GM12878 (cell line): ENCODE measurements at regions of chr5 and their contacts with region 1.

Region 1: DNA sequence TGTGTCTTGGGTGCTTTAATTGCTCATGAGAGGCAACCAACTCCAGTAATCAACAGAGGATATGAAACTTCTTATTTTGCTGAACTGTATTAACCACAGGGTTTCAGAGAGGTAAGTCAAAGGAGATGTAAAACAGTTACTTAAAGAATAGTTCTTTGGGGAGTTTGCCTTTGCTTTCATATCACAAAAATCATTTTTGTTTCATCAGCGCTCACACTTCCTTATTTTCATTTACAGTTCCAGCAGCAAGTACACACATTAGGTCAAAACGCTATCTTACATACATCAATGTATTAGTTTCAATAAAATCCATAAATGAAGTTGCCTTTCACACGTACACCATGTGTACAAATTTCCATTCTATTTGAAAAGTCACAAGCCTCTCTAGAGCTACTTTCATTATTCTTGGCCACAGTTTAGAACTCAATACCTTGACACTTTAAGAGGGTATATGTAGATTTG is 50.1 kb downstream of the ST8SIA4 start:
- DNase-seq: peak; percentile 89
- ATAC-seq: peak; percentile 89
- H3K4me3 ChIP-seq: peak overlapping the region; percentile 21; the same call in 1 of the 2 replicates
- H3K27ac ChIP-seq: peak overlapping the region; percentile 94
- H3K4me1 ChIP-seq: peaks cover 38% of the 10 kb centered on the region
- H3K27me3 ChIP-seq: no peaks in the 10 kb centered on the region
- CTCF ChIP-seq: no peak
- EP300 ChIP-seq: peak; percentile 95 to 96
- POLR2A ChIP-seq: no peak
- RAD21 ChIP-seq: peak; percentile 20; the same call in 1 of the 2 replicates

Region 2: DNA sequence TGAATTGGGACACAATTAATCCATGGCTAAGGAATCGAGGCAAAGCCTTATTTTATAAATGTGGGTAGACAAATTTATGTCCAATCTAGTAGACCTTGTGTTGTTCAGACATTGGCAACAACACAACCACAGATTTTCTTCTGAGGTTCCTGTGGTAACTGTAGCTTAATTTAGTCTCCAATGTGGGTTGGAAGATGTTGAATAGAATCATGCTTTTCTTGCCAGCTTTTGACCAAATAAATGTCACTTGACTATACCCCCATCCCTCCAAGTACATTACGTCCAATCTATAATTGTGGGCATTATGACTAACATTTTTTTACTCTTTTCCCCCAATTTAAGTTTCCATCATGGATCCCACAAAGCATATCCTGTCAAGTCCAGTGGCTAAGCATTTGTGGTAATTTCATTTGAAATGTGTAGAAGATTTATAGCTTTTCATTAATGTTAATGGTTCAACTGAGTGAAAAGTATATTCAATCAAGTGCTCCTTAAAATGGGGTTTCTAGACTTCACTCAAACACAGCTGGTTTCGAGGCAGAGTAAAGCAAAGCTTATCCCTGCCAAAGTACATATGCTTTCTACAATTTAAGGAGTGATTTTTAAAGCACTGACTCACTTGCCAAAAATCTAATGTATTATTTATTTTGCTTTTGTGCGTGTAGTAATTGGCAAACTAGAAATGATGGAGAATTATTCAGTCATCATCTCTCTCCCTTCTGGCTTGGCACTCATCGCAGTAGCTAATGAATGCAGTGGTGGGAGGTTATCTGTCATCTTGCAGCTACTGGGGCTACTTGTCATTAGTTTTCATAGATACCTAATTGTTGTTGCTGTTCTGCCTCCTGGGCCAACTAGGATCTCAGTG is 176.0 kb before region 1 on chr5:
- CTCF ChIA-PET with region 1: no interaction called
- POLR2A ChIA-PET with region 1: no interaction called
- RAD21 ChIA-PET with region 1: no interaction called
- SMC1A ChIA-PET with region 1: no interaction called
- in situ Hi-C with region 1: no loop called
- intact Hi-C with region 1: no loop called
- DNase-seq: no peak
- ATAC-seq: no peak; the same call in 2 of the 3 replicates
- H3K4me3 ChIP-seq: no peak overlapping the region
- H3K27ac ChIP-seq: no peak overlapping the region
- H3K4me1 ChIP-seq: no peaks in the 10 kb centered on the region
- H3K27me3 ChIP-seq: no peaks in the 10 kb centered on the region
- CTCF ChIP-seq: no peak
- EP300 ChIP-seq: no peak
- POLR2A ChIP-seq: no peak
- RAD21 ChIP-seq: no peak

Region 3: GRCh38 chr5:100697970-100698369 is 155.0 kb before region 1 on chr5:
- CTCF ChIA-PET with region 1: no interaction called
- POLR2A ChIA-PET with region 1: no interaction called
- RAD21 ChIA-PET with region 1: no interaction called
- SMC1A ChIA-PET with region 1: no interaction called
- in situ Hi-C with region 1: no loop called
- intact Hi-C with region 1: no loop called
- DNase-seq: no peak
- ATAC-seq: no peak
- H3K4me3 ChIP-seq: no peak overlapping the region
- H3K27ac ChIP-seq: no peak overlapping the region
- H3K4me1 ChIP-seq: no peaks in the 10 kb centered on the region
- H3K27me3 ChIP-seq: no peaks in the 10 kb centered on the region
- CTCF ChIP-seq: peak in 2 of 3 experiments; percentile 12 to 14; a peak in 1 of 6 replicates
- EP300 ChIP-seq: no peak
- POLR2A ChIP-seq: no peak
- RAD21 ChIP-seq: no peak

Region 4: GRCh38 chr5:100890461-100891008 is 37.5 kb after region 1 on chr5:
- CTCF ChIA-PET with region 1: interaction called, 11 read pairs
- POLR2A ChIA-PET with region 1: interaction called, 3 read pairs
- RAD21 ChIA-PET with region 1: interaction called, 122 read pairs
- SMC1A ChIA-PET with region 1: interaction called, 220 read pairs
- in situ Hi-C with region 1: no loop called
- intact Hi-C with region 1: loop called (anchors 1 kb)
- DNase-seq: peak; percentile 64
- ATAC-seq: peak; percentile 73
- H3K4me3 ChIP-seq: peak overlapping the region; percentile 58
- H3K27ac ChIP-seq: peak overlapping the region; percentile 87
- H3K4me1 ChIP-seq: peaks cover 15% of the 10 kb centered on the region; the same call in 1 of the 2 replicates
- H3K27me3 ChIP-seq: no peaks in the 10 kb centered on the region
- CTCF ChIP-seq: no peak
- EP300 ChIP-seq: peak; percentile 46 to 57; a peak in 2 of 4 replicates
- POLR2A ChIP-seq: no peak
- RAD21 ChIP-seq: 0 out of 2 replicates have a peak, but pooled peaks have one; percentile 2

Region 5: GRCh38 chr5:100896054-100896453 is 43.0 kb after region 1 on chr5:
- CTCF ChIA-PET with region 1: interaction called, 15 read pairs
- POLR2A ChIA-PET with region 1: interaction called, 61 read pairs
- RAD21 ChIA-PET with region 1: interaction called, 122 read pairs
- SMC1A ChIA-PET with region 1: interaction called, 220 read pairs
- in situ Hi-C with region 1: no loop called
- intact Hi-C with region 1: loop called (anchors 1 kb)
- DNase-seq: no peak
- ATAC-seq: no peak
- H3K4me3 ChIP-seq: no peak overlapping the region
- H3K27ac ChIP-seq: no peak overlapping the region
- H3K4me1 ChIP-seq: no peaks in the 10 kb centered on the region
- H3K27me3 ChIP-seq: no peaks in the 10 kb centered on the region
- CTCF ChIP-seq: no peak
- EP300 ChIP-seq: no peak
- POLR2A ChIP-seq: no peak
- RAD21 ChIP-seq: no peak

Region 6: DNA sequence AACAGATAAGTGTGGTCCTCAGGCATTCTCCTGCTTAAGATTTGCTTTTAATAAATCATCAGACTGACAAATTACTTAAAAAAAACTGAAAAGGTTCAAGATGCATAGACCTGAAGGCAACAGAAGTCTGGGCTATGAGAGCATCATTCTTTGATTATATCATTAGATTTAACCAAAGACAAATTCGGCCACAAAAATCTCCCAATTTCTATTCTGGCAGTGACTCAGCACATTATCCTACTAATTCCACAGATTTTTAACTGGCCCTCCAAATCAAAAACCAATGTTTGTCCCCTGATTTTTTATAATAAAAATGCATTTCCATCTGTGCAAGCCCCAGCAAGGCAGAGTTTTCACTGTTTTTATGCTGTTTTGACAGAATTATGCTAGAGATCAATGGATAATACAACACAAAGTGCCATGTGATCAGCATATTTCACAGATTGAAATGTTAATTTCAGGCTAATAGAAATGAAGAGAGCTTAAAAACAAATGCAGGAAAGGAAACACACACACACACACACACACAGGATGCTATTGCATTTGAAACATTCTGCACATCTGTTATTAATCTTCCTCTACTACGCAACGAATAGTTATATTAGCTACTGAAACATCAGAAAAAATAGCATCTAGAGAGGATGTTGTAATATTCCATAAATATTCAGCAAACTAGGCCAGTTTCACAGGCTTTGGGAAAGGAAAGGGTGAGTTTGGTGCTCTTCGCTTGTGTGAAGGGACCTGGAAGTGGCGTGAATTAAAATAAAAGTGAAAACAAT is 227.6 kb after region 1 on chr5:
- CTCF ChIA-PET with region 1: no interaction called
- POLR2A ChIA-PET with region 1: no interaction called
- RAD21 ChIA-PET with region 1: no interaction called
- SMC1A ChIA-PET with region 1: no interaction called
- in situ Hi-C with region 1: no loop called
- intact Hi-C with region 1: no loop called
- DNase-seq: no peak
- ATAC-seq: no peak
- H3K4me3 ChIP-seq: no peak overlapping the region
- H3K27ac ChIP-seq: no peak overlapping the region
- H3K4me1 ChIP-seq: no peaks in the 10 kb centered on the region
- H3K27me3 ChIP-seq: no peaks in the 10 kb centered on the region
- CTCF ChIP-seq: no peak
- EP300 ChIP-seq: no peak
- POLR2A ChIP-seq: no peak
- RAD21 ChIP-seq: no peak

Region 7: GRCh38 chr5:101590384-101590783 is 737.4 kb after region 1 on chr5:
- CTCF ChIA-PET with region 1: no interaction called
- POLR2A ChIA-PET with region 1: no interaction called
- RAD21 ChIA-PET with region 1: no interaction called
- SMC1A ChIA-PET with region 1: no interaction called
- in situ Hi-C with region 1: no loop called
- intact Hi-C with region 1: no loop called
- DNase-seq: no peak
- ATAC-seq: peak; percentile 63
- H3K4me3 ChIP-seq: no peak overlapping the region
- H3K27ac ChIP-seq: no peak overlapping the region
- H3K4me1 ChIP-seq: no peaks in the 10 kb centered on the region
- H3K27me3 ChIP-seq: no peaks in the 10 kb centered on the region
- CTCF ChIP-seq: peak; percentile 28 to 42 (median 42); a peak in 5 of 6 replicates
- EP300 ChIP-seq: no peak
- POLR2A ChIP-seq: no peak
- RAD21 ChIP-seq: peak; percentile 55